Activated CD4-positive, alpha-beta memory T cell treated with anti-CD3 and anti-CD28 coated beads for 36 hours (primary cell): ENCODE measurements at regions of chr16 and their contacts with region 1.

Region 1: DNA sequence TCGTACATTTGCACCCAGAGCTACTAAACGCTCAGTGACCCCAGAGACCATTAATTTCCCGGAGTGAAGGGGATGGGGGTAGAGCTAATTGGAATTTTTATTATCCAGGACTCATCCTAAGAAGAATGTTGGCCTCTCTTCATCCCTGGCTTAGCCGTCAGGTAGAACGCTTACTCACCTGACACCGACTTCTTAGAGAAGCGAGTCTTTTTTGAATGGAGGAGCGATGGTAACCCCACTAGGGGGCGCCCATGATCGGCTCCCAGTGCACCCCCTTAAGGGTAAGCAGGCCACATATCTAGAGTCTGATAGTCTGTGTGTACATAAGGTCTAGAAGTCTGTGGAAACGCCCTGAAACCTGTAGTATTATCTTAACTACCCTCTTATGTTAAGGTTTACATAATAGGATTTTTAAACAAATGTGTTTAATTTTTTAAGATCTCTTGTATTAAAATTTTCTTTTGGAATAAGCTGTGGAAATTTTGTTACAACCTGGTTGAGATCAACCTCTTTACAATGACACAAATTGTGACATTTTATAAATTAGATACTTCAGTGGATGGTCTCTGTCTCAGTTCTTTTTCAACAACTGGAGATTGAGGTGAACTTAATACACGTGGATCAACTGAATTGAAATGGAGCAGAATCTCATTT is 229.8 kb downstream of the CPPED1 start:
- DNase-seq: peak; percentile 84
- H3K4me3 Mint-ChIP-seq: no peak overlapping the region
- H3K27ac Mint-ChIP-seq: no peak overlapping the region
- H3K4me1 Mint-ChIP-seq: peaks cover 3% of the 10 kb centered on the region
- H3K27me3 Mint-ChIP-seq: peaks cover 2% of the 10 kb centered on the region

Region 2: DNA sequence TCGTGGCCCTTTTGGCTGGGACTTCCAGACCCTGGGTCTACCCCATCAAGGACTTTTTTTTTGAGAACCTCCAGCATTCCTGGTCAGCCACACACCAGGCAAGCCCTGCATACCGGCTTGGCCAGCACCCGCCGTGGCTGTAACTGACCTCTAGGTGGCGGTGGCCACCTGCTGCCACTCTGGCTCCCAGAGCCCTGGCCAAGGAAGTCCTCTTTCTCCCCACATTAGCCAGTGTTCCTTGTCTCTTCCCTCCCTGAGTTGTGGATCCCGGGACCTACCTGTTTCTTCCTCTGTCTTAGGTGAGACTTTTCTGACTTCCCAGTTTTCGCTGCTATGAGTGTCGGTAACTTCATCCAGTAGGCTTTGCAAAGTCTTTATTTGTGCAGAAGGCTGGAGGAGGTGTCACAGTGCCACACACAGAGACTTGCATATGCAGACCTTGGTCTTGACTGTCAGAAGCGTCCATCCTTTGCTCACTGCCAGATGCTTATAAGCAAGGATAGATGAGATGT is 118.5 kb before region 1 on chr16:
- CTCF ChIA-PET with region 1: interaction called, 11 read pairs
- POLR2A ChIA-PET with region 1: no interaction called
- intact Hi-C with region 1: loop called (anchors 5 kb)
- DNase-seq: peak; percentile 67
- H3K4me3 Mint-ChIP-seq: no peak overlapping the region
- H3K27ac Mint-ChIP-seq: no peak overlapping the region
- H3K4me1 Mint-ChIP-seq: peaks cover 16% of the 10 kb centered on the region
- H3K27me3 Mint-ChIP-seq: no peaks in the 10 kb centered on the region

Region 3: DNA sequence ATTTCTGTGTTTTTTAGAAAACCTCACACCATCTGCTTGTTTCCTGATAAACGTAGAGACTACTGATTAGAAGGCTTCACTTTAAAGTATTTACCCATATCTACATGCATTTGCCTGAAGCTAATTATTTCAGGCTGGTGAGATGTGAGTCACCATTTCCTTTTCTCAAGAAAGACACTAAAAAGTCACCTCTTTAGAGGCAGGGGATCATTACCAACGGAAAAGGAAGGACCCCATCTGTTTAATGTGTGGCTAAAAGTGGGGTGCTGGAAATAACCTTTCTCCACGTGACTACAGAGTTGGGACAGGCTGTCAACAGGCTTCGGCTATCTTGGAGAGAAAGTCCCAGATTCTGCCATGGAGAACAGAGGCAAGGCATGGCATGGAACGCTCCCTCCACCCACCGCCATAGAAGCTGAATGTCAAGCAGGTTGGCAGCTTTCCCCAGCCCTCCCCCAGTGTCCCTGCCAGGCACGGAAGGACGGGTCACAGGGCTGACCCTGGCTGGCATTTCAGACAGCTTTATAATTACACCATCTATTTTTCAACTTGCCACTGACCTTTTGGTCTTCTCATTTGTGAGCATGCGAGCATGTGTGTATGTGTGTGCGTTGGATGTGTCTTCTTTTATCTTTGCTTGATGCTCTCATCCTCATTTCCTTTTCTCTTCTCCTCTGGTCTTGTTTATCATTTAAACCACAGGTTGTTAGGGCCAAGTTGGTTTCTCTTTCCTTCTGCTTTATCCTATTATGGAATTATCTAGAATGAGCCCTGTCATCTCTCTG is 72.8 kb after region 1 on chr16:
- CTCF ChIA-PET with region 1: interaction called, 3 read pairs
- POLR2A ChIA-PET with region 1: no interaction called
- intact Hi-C with region 1: loop called (anchors 2 kb)
- DNase-seq: peak; percentile 44
- H3K4me3 Mint-ChIP-seq: peak overlapping the region; percentile 42
- H3K27ac Mint-ChIP-seq: peak overlapping the region; percentile 75
- H3K4me1 Mint-ChIP-seq: peaks cover 16% of the 10 kb centered on the region
- H3K27me3 Mint-ChIP-seq: peaks cover 1% of the 10 kb centered on the region

Region 4: DNA sequence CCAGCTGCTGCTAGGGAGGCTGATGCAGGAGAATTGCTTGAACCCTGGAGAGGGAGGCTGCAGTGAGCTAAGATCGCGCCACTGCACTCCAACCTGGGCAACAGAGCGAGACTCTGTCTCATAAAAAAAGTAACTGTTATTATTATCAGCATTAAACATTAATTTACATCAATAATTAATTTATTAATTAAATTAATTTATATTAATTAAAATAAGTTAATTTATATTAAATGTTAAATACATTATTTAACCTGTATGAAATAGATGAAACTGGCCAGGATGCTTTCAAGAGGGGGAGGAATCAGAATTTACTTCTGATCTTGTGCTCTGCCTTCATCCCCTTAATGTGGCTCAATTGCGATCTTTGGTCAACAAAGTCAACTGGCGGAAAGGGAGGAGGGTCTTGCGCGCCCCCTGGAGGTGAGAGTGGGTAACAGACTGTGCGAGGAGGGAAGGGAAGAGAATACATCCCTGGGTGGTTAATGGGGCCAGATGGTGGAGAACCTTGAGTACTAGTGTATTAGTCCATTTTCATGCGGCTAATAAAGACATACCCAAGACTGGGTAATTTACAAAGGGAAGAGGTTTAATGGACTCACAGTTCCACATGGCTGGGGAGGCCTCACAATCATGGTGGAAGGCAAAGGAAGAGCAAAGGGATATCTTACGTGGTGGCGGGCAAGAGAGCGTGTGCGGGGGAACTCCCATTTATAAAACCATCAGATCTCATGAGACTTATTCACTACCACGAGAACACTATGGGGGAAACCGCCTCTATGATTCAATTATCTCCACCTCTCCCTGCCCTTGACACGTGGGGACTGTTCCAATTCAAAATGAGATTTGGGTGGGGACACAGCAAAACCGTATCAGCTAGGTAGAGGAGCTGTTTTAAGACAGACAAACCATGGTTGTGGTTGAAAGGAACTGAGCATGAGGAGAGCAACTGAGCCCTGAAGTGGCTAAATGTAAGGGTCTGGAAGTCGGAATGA is 245.6 kb after region 1 on chr16:
- CTCF ChIA-PET with region 1: interaction called, 16 read pairs
- POLR2A ChIA-PET with region 1: no interaction called
- intact Hi-C with region 1: loop called (anchors 1 kb)
- DNase-seq: peak; percentile 88
- H3K4me3 Mint-ChIP-seq: no peak overlapping the region
- H3K27ac Mint-ChIP-seq: no peak overlapping the region
- H3K4me1 Mint-ChIP-seq: peaks cover 4% of the 10 kb centered on the region
- H3K27me3 Mint-ChIP-seq: no peaks in the 10 kb centered on the region

Region 5: DNA sequence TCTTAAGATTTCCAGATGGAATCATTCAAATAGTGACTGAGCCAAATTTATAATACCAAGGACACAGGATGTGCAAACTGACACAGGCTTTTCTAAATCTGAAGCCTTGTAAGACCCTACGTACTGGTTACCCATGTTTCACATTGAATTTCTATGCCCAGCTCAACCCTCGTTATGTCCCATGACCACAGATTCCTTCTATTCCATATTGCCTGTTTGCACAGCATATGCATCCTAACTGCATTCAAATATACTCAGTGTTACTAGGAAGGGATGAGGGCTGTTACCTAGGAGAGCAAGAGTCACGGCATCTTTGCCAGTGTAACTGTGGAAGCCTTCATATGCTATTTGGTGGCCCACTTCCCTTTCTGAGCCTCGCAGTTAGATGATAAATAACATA is 632.7 kb after region 1 on chr16:
- CTCF ChIA-PET with region 1: no interaction called
- POLR2A ChIA-PET with region 1: no interaction called
- intact Hi-C with region 1: no loop called
- DNase-seq: no peak
- H3K4me3 Mint-ChIP-seq: no peak overlapping the region
- H3K27ac Mint-ChIP-seq: no peak overlapping the region
- H3K4me1 Mint-ChIP-seq: no peaks in the 10 kb centered on the region
- H3K27me3 Mint-ChIP-seq: no peaks in the 10 kb centered on the region